ENCODE measurements at regions of chr16 and their contacts with region 1.

Region 1: GRCh38 chr16:74709441-74709877 is 8.8 kb upstream of the MLKL start:
- DNase-seq: peak; percentile 64 to 85 (median 71)
- ATAC-seq: peak; percentile 83 to 95 (median 90)
- H3K4me3 ChIP-seq: no peak overlapping the region
- H3K27ac ChIP-seq: no peak overlapping the region
- H3K4me1 ChIP-seq: peaks cover 0 to 5% (median 0%) of the 10 kb centered on the region in 12 donors
- H3K27me3 ChIP-seq: no peaks in the 10 kb centered on the region
- CTCF ChIP-seq: peak; percentile 93 to 99 (median 96)
- POLR2A ChIP-seq: no peak

Region 2: DNA sequence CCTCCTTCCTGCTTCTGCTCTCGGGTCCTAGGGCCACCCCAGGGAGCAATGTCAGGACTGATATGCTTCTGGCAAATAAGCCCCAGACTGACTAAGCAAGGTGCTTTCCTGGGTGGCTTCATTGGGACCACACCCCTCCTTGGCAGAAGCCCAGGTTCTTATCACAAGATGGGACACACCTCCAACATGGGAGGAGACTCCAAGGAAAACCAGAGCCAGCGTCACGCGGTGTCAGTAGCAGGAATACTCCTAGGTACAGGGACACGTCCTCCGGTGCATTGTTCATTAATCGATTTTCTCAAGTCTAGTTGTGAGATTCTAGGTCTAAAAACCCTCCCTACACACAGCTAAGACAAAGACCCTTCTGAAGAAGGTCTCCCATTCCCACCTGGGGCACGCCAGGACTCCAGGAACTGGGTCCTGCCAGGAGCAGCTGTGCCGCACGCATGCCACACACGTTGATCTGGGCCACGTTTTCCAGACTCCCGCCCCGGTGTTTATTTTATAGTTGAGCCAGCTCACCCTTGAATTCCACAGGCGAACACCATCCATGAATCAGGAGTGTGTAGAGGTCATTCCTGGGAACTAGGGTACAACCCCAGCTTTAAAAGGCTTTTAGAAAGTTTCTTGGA is 34.3 kb after region 1 on chr16:
- intact Hi-C with region 1: no loop called
- DNase-seq: no peak
- ATAC-seq: peak in 2 of 4 donors; percentile 25 to 33
- H3K4me3 ChIP-seq: no peak overlapping the region
- H3K27ac ChIP-seq: no peak overlapping the region
- H3K4me1 ChIP-seq: no peaks in the 10 kb centered on the region
- H3K27me3 ChIP-seq: peaks cover 0 to 16% (median 0%) of the 10 kb centered on the region in 9 donors
- CTCF ChIP-seq: no peak
- POLR2A ChIP-seq: no peak

Region 3: DNA sequence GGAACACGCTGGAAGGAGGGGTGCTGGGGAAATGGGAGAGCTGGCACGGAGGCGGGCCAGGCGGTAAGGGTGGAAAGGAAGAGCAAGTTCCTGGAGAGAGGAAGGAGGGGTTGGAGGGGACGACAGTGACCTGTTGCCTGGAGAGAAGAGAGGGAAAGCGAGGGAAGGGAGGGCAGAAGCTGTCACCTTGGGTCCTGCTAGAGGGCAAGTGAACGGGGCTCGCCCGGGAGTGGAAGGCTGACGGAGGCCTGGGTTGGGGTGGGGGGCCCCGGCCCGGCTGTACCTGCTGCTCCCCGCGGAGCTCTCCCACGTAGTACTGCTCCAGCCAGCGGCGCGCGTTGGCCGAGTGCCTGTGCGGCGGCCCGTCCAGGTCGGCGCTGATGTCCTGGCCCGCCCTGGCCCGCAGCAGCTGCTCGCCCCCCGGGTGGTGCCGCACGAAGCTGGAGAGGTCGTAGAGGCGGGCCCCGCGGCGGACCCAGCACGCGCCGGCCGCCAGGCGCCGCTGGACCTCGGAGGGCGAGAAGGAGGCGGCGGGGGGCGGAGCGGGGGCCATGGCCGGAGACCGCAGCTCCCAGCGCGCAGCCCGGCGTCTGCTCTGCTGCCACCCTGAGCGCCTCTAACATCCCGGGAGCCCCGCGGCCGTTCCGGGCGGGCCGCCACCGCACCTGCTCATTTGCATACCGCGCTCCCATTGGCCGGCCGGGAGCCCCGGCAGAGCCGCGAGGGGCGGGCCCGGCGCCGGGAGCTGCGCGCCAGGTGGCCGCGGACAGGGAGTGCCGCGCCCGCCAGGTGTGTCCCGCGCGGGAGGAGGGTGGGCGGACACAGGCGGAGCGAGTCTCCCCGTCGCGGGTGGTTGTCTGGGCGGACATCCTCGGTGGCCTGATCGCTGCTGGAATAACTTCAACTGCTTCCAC is 65.0 kb after region 1 on chr16 and contains the start of gene FA2H:
- intact Hi-C with region 1: no loop called
- DNase-seq: peak; percentile 37 to 77 (median 66)
- ATAC-seq: peak; percentile 71 to 97 (median 91)
- H3K4me3 ChIP-seq: peak within 1 kb of the TSS; percentile 20 to 60 (median 44)
- H3K27ac ChIP-seq: peak within 1 kb of the TSS in 1 of 12 donors; percentile 22
- H3K4me1 ChIP-seq: peaks cover 0 to 14% (median 8%) of the 10 kb centered on the region in 12 donors
- H3K27me3 ChIP-seq: peaks cover 0 to 48% (median 19%) of the 10 kb centered on the region in 9 donors
- CTCF ChIP-seq: peak in 7 of 12 donors; percentile 16 to 52 (median 40)
- POLR2A ChIP-seq: no peak
- total RNA-seq, gene FA2H: 0.28 to 0.50 TPM in 2 of 9 donors, not detected in the others

Region 4: GRCh38 chr16:74813109-74813641 is 103.7 kb after region 1 on chr16:
- intact Hi-C with region 1: loop called in 1 of 10 experiments (anchors 5 kb)
- DNase-seq: peak; percentile 61 to 88 (median 73)
- ATAC-seq: peak; percentile 90 to 99 (median 98)
- H3K4me3 ChIP-seq: no peak overlapping the region
- H3K27ac ChIP-seq: no peak overlapping the region
- H3K4me1 ChIP-seq: peaks cover 0 to 6% (median 0%) of the 10 kb centered on the region in 12 donors
- H3K27me3 ChIP-seq: no peaks in the 10 kb centered on the region
- CTCF ChIP-seq: peak; percentile 78 to 96 (median 90)
- POLR2A ChIP-seq: no peak

Region 5: DNA sequence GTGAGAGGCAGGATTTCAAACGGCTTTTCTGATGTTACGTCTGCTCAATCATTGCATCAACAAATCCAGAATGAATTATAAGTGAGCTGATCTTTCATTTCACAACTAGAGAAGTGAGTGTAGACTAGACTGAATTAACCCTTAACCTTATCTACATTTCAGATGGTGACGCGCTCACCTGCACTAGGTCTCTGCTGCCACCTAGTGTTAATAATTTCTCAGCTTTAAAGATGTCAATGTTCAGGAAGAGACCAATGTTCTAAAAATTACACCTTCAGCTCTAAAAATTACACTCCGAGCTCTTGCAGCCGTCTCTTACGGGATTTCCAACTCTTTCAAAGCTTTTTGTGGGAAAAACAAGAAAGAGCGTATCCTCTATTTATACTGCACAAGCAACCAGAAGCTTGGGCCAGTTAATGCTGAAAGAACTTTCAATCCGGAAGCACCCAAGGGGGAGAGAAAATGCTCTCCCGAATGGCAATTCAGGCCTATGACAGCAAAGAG is 153.3 kb after region 1 on chr16:
- intact Hi-C with region 1: loop called (anchors 1 to 5 kb)
- DNase-seq: no peak
- ATAC-seq: peak in 1 of 4 donors; percentile 52
- H3K4me3 ChIP-seq: no peak overlapping the region
- H3K27ac ChIP-seq: no peak overlapping the region
- H3K4me1 ChIP-seq: peaks cover 0 to 9% (median 0%) of the 10 kb centered on the region in 12 donors
- H3K27me3 ChIP-seq: no peaks in the 10 kb centered on the region
- CTCF ChIP-seq: peak; percentile 73 to 93 (median 81)
- POLR2A ChIP-seq: no peak

Region 6: DNA sequence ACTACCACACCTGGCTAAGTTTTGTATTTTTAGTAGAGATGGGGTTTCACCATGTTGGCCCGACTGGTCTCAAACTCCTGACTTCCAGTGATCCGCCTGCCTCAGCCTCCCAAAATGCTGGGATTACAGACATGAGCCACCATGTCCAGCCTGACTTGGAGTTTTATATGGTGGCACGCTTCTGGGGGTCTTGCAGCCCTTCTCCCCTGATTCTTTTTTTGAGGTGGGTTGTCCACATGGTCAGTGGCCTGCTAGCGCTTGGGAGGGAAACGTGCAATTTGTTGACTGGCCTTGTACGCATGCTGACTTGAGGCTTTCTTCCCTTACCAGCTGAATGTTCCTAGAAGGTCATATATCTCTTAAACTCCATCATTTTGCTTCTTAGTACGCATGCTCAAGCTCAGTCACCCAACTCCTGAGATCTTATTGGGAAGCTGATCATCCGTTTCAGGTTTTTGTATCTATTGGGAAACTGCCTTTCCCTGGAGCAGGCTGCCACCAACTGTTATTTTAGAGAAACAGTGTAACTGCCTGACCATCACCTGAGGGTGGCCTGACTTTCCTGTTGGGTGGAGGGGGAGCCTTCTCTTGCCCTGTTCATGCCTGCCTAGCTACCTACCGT is 420.8 kb after region 1 on chr16:
- intact Hi-C with region 1: loop called in 2 of 10 experiments (anchors 10 kb)
- DNase-seq: no peak
- ATAC-seq: peak in 1 of 4 donors; percentile 56
- H3K4me3 ChIP-seq: no peak overlapping the region
- H3K27ac ChIP-seq: no peak overlapping the region
- H3K4me1 ChIP-seq: no peaks in the 10 kb centered on the region
- H3K27me3 ChIP-seq: no peaks in the 10 kb centered on the region
- CTCF ChIP-seq: peak in 8 of 12 donors; percentile 16 to 51 (median 26)
- POLR2A ChIP-seq: no peak

Measured in heart left ventricle (tissue), 16 donors.